Kidney (tissue), 22 donors: ENCODE measurements at regions of chr1 and their contacts with region 1.

Region 1: GRCh38 chr1:11645670-11646265 is 8.5 kb downstream of the FBXO2 start:
- DNase-seq: peak; percentile 81 to 91 (median 87)
- H3K4me3 ChIP-seq: no peak overlapping the region
- H3K27ac ChIP-seq: no peak overlapping the region
- H3K4me1 ChIP-seq: peaks cover 0 to 4% (median 0%) of the 10 kb centered on the region in 3 donors
- H3K27me3 ChIP-seq: peaks cover 11% of the 10 kb centered on the region
- CTCF ChIP-seq: peak; percentile 64

Region 2: GRCh38 chr1:11037740-11038182 is 608.0 kb before region 1 on chr1:
- intact Hi-C with region 1: loop called (anchors 5 kb)
- DNase-seq: peak; percentile 86 to 93 (median 90)
- H3K4me3 ChIP-seq: no peak overlapping the region
- H3K27ac ChIP-seq: no peak overlapping the region
- H3K4me1 ChIP-seq: no peaks in the 10 kb centered on the region
- H3K27me3 ChIP-seq: no peaks in the 10 kb centered on the region
- CTCF ChIP-seq: peak; percentile 98

Region 3: DNA sequence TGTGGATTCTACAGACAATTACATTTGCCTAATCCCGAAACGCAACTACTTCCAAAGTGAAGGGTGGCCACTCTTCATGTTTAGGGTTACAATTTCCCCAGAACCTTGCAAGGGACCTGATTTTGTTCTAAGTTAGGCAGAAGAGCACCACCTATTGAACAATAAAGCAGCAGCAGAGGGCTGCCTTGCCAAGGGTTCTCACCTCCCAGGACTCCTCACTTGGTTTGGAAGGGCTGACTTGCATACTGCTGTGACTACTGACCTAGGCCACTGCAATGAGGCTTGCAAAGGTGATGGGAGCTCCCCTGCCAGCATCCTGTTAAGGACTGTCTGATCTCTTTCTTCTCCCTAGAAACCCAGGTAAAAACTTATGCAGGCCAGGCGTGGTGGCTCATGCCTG is 397.6 kb before region 1 on chr1:
- intact Hi-C with region 1: loop called (anchors 10 kb)
- DNase-seq: no peak
- H3K4me3 ChIP-seq: no peak overlapping the region
- H3K27ac ChIP-seq: no peak overlapping the region
- H3K4me1 ChIP-seq: no peaks in the 10 kb centered on the region
- H3K27me3 ChIP-seq: no peaks in the 10 kb centered on the region
- CTCF ChIP-seq: no peak

Region 4: DNA sequence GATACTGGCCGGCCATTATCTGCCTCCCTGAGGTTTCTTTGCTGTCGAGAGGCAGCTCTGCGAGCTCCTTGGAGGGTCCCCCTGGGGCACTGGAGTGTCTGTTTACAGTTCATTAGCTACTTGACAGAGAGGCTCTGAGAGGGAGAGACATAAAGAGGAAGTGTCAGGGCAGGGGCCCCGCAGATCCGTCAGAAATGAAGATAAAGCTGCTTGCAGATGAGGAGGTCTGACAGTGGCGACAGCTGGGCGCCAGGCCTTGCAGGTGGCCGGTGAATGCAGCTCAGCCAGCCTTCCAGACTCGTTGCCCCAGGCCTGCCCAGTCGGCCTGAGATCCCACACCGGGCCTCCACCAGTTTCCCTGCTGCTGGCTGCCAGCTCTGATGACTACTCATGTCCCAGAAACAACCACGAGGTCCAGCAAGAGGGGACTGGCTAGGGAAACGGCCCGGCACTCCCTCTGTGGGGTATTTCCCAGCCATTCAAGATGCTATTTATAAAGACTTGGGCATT is 82.2 kb before region 1 on chr1:
- intact Hi-C with region 1: no loop called
- DNase-seq: peak; percentile 51 to 80 (median 80)
- H3K4me3 ChIP-seq: no peak overlapping the region
- H3K27ac ChIP-seq: no peak overlapping the region
- H3K4me1 ChIP-seq: no peaks in the 10 kb centered on the region
- H3K27me3 ChIP-seq: no peaks in the 10 kb centered on the region
- CTCF ChIP-seq: no peak

Region 5: GRCh38 chr1:12376106-12377045 is 730.6 kb after region 1 on chr1:
- intact Hi-C with region 1: no loop called
- DNase-seq: peak in 1 of 5 donors; percentile 46
- H3K4me3 ChIP-seq: no peak overlapping the region
- H3K27ac ChIP-seq: no peak overlapping the region
- H3K4me1 ChIP-seq: peaks cover 0 to 4% (median 0%) of the 10 kb centered on the region in 3 donors
- H3K27me3 ChIP-seq: no peaks in the 10 kb centered on the region
- CTCF ChIP-seq: no peak